ENCODE measurements at regions of chr15 and their contacts with region 1.

Region 1: DNA sequence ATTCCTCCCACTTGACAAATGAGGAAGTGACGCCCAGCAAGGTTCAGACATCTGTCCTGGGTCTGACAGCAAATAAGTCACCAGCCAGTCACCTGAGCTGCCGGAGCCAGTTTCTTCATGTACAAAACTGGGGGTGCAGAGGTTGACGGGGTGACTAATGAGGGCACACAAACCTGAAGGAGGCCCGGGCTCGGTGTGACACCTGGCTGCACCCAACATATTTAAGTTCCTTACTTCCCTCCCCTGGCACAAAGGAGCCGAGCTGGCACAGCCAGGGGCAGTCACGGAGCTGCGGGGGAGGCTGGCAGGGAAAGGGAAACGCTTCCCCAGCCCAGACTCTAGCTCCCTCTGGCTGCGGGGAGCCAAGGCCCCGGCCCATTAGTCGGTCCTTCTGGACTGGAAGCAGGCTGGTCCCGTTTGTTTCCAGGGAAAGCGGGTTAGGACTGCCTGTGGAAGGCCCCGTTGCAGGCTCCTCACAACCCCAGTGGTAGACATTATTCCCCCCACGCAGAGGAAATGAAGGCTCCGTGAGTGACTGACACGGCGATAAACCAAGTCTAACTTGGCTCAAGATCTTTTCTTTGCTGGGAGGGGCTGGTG is 2.3 kb downstream of the FBXL22 start:
- DNase-seq: peak; percentile 79
- ATAC-seq: peak; percentile 53

Region 2: DNA sequence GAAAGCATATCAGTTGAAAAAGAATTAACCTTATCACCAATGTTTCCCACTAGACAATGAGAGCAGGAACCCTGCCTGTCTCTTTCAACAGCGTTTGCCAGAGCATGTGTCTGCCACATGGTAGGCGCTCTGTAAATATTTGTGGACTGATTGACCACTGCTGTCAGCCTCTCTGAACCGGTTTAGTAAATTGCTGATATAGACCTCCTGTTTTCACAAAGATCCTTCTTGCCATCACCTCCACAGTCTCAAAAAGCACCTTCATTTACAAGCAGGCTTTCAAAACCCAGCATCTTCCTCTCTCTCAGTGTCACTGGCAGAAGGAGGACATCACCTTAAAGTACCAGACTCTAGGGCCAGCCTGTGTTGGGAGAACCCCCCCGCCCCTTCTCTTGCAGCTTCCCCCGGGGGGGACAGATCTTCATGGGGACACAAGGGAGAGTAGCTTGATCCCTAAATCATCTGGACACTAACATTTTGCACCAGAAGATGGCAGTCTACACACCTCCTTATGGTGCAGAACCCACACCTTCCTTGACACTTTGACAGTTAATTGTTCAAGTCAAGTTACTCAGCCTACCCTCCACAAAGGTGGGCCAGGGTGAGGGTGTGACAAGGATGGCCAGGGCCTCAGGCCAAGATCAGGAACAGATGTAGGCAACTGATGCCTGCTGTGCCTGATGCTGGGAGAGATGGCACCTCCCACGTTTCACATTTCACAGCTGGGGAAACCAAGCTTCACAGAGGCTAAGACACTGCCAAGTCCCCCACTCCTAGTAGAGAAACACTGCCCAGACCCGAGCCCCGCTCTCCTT is 132.9 kb before region 1 on chr15:
- intact Hi-C with region 1: loop called (anchors 5 kb)
- DNase-seq: no peak
- ATAC-seq: peak; percentile 70

Region 3: GRCh38 chr15:63487076-63487757 is 112.3 kb before region 1 on chr15:
- intact Hi-C with region 1: loop called (anchors 1 kb)
- DNase-seq: peak; percentile 94
- ATAC-seq: peak; percentile 90

Region 4: DNA sequence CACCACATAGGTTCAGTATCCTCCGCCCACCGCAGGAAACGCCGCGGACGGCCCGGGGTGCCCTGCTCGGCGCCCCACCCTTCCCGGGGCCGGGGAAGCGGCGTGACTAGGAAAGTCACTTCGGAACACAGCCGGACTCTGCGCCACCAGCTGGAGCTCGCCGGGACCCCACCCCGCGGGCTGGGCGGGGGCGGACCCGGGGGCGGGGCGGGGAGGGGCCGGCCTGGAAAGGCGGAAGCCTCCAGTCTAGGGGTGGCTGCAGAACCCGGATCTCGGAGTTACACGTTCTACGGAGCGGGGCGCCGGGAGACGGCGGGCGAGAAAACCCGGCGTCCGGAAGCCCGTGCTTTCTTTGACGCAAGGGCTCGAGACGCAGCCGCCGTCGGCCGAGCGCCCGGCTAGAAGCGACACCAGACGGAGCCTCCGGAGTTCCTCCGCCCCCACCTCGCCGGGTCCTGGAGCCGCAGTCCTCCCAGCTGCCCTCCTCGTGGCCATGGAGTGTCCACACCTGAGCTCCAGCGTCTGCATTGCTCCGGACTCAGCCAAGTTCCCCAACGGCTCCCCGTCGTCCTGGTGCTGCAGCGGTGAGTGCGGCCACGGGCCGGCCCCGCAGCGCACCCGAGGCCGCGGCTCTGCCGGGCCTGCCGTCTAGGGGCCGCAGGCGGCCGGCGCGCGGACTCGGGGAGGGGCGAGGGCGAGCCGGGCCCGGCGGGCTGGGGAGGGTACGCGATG is 95.1 kb before region 1 on chr15 and contains the start of gene USP3:
- intact Hi-C with region 1: loop called (anchors 1 kb)
- DNase-seq: peak; percentile 98
- ATAC-seq: peak; percentile 93
- total RNA-seq, gene USP3: 13.7 TPM

Region 5: GRCh38 chr15:63683343-63683951 is 83.9 kb after region 1 on chr15:
- intact Hi-C with region 1: no loop called
- DNase-seq: no peak
- ATAC-seq: no peak